GM10248 (cell line): ENCODE measurements at regions of chr14 and their contacts with region 1.

Region 1: DNA sequence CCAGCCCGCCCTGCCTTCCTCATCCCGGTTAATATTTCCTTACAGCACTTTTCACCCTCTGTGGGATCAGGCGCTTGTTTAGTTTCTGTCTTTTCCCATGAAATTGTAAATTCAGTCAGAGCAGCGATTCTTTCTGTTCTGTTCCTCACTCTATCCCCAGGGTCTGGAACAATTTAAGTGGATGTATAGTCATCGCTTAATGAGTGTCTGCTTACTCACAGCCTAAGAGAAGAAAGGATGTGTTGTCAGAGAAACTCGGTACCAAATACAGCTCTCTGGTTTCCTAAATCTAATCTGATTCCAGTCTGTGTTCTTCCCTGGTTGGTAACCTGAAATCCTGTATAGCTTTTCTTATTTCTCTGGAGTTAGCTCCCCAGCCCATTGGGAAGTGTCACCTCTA is 44.9 kb downstream of the FOS start:
- DNase-seq: no peak
- CTCF ChIP-seq: no peak

Region 2: DNA sequence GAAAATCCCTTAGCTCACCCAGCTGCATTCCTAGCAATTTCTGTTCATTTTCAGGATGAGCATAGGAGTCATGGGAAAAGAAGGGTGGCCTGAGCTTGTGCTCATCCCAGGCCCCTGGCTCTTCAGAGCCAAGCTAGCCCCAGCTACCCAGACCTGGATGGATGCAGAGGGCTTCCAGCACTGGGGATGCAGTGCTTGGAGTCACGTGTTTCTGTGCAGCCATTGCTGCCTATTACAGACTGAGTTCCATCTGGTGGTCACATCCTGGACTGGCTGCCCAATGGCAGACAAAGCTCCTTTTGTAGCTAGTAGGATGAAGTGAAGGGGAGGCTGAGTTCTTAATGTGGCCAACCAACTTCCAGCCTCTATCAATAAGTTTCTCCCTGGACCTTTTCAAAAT is 50.0 kb after region 1 on chr14:
- CTCF ChIA-PET with region 1: interaction called, 5 read pairs
- POLR2A ChIA-PET with region 1: interaction called, 12 read pairs
- DNase-seq: no peak
- CTCF ChIP-seq: no peak